ENCODE measurements at regions of chr5 and their contacts with region 1.

Region 1: DNA sequence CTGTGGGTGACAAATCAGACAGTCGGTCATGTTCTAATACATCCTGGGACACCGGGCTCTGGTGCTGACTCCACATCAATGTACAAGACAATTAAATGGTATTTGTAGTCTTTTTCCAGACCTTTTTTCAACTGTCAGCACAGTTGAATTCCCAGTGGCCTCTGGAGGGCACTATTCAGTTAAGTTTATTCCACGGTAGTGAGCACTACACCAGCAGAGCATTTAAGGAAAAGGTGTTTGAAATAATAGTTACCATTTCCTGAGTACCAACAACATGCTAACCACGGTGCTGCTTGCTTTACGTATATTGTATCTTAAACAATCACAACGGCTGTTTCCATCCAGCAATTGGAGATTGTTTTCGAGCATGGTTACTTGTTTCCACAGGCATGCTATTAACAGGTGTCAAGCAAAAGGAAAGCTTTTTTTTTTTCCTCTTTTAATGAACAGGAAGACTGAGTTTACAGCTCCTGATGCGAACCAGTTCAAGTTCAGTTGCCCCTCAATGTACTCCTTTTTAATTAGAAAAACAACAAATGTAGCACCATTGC is 186.7 kb downstream of the PDZD2 start:
- DNase-seq: peak in 8 of 9 donors; percentile 7 to 77 (median 66)
- ATAC-seq: peak; percentile 91
- H3K4me3 ChIP-seq: no peak overlapping the region
- H3K4me3 Mint-ChIP-seq: peak overlapping the region in 9 of 10 donors; percentile 25 to 79 (median 64)
- H3K27ac ChIP-seq: no peak overlapping the region
- H3K27ac Mint-ChIP-seq: peak overlapping the region in 7 of 9 donors; percentile 17 to 80 (median 32)
- H3K4me1 ChIP-seq: no peaks in the 10 kb centered on the region
- H3K4me1 Mint-ChIP-seq: peaks cover 0 to 9% (median 7%) of the 10 kb centered on the region in 7 donors
- H3K27me3 ChIP-seq: no peaks in the 10 kb centered on the region
- H3K27me3 Mint-ChIP-seq: peaks cover 0 to 9% (median 7%) of the 10 kb centered on the region in 5 donors

Region 2: GRCh38 chr5:30908356-30908755 is 917.2 kb before region 1 on chr5:
- CTCF ChIA-PET with region 1: no interaction called
- POLR2A ChIA-PET with region 1: no interaction called
- intact Hi-C with region 1: no loop called
- DNase-seq: no peak
- ATAC-seq: no peak
- H3K4me3 ChIP-seq: no peak overlapping the region
- H3K4me3 Mint-ChIP-seq: no peak overlapping the region
- H3K27ac ChIP-seq: no peak overlapping the region
- H3K27ac Mint-ChIP-seq: no peak overlapping the region
- H3K4me1 ChIP-seq: no peaks in the 10 kb centered on the region
- H3K4me1 Mint-ChIP-seq: no peaks in the 10 kb centered on the region
- H3K27me3 ChIP-seq: no peaks in the 10 kb centered on the region
- H3K27me3 Mint-ChIP-seq: no peaks in the 10 kb centered on the region

Region 3: DNA sequence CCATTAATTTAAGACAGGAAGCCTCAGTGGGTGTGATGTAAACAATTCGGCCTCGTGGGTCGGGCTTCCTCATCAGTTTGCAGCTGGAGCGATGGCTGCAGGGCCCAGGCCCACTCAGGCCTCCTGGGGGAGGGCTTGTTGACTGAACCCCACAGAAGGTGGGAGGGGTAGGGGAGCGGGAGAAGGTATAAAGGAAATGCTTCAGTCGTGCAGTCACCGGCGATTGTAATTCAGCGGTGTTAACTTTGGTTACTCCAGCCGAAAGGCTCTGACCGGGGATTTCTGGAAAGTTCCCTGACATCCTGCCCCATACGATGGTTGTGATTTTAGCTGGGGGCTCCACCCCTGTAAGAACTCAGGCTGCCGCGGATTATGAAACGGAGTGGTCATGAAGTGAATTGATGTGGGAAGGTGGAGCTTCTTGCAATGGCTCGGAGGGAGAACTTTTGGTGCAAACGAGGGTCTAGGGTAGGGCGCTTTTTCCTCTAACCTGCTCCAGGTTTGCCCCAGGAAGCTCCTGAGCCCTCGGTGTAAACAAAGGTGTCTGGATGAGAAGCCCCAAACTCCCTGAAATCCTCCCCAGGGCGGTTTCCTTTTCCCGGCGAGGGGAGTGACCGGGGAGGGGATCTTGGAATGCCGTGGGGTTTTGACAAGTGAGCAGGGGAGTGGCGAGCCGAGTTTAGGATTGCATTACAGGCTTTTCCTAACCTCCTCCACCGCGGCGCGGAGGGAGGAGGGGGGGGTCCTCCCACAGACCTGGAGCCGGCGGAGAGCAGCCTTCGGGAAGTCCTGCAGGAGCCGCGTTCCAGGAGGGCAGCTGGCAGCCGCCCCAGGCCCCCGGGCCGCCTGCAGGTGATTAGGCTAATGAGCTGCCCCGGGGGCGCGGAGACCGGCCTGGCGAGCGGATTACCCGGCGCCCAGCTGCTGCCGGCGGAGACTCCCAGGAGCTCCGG is 28.9 kb after region 1 on chr5:
- CTCF ChIA-PET with region 1: interaction called, 3 read pairs
- POLR2A ChIA-PET with region 1: no interaction called
- intact Hi-C with region 1: loop called in 1 of 2 experiments (anchors 1 kb)
- DNase-seq: peak in 4 of 9 donors; percentile 10 to 26 (median 24)
- ATAC-seq: peak; percentile 43
- H3K4me3 ChIP-seq: peak overlapping the region; percentile 63
- H3K4me3 Mint-ChIP-seq: peak overlapping the region; percentile 76 to 97 (median 88)
- H3K27ac ChIP-seq: peak overlapping the region; percentile 66
- H3K27ac Mint-ChIP-seq: peak overlapping the region in 8 of 9 donors; percentile 81 to 93 (median 85)
- H3K4me1 ChIP-seq: no peaks in the 10 kb centered on the region
- H3K4me1 Mint-ChIP-seq: peaks cover 9 to 44% (median 28%) of the 10 kb centered on the region in 7 donors
- H3K27me3 ChIP-seq: no peaks in the 10 kb centered on the region
- H3K27me3 Mint-ChIP-seq: peaks cover 0 to 45% (median 22%) of the 10 kb centered on the region in 5 donors

Region 4: GRCh38 chr5:32076699-32077695 is 251.4 kb after region 1 on chr5:
- CTCF ChIA-PET with region 1: interaction called, 22 read pairs
- POLR2A ChIA-PET with region 1: no interaction called
- intact Hi-C with region 1: loop called in 1 of 2 experiments (anchors 1 kb)
- DNase-seq: peak in 6 of 9 donors; percentile 10 to 66 (median 57)
- ATAC-seq: no peak
- H3K4me3 ChIP-seq: no peak overlapping the region
- H3K4me3 Mint-ChIP-seq: no peak overlapping the region
- H3K27ac ChIP-seq: no peak overlapping the region
- H3K27ac Mint-ChIP-seq: no peak overlapping the region
- H3K4me1 ChIP-seq: no peaks in the 10 kb centered on the region
- H3K4me1 Mint-ChIP-seq: peaks cover 0 to 5% (median 0%) of the 10 kb centered on the region in 7 donors
- H3K27me3 ChIP-seq: no peaks in the 10 kb centered on the region
- H3K27me3 Mint-ChIP-seq: no peaks in the 10 kb centered on the region

Region 5: GRCh38 chr5:32232441-32233219 is 407.0 kb after region 1 on chr5:
- CTCF ChIA-PET with region 1: no interaction called
- POLR2A ChIA-PET with region 1: no interaction called
- intact Hi-C with region 1: loop called in 1 of 2 experiments (anchors 10 kb)
- DNase-seq: peak; percentile 45 to 73 (median 64)
- ATAC-seq: peak; percentile 88
- H3K4me3 ChIP-seq: no peak overlapping the region
- H3K4me3 Mint-ChIP-seq: no peak overlapping the region
- H3K27ac ChIP-seq: no peak overlapping the region
- H3K27ac Mint-ChIP-seq: peak overlapping the region; percentile 45 to 71 (median 62)
- H3K4me1 ChIP-seq: no peaks in the 10 kb centered on the region
- H3K4me1 Mint-ChIP-seq: peaks cover 0 to 12% (median 7%) of the 10 kb centered on the region in 7 donors
- H3K27me3 ChIP-seq: no peaks in the 10 kb centered on the region
- H3K27me3 Mint-ChIP-seq: no peaks in the 10 kb centered on the region

Region 6: GRCh38 chr5:32261198-32261597 is 435.6 kb after region 1 on chr5:
- CTCF ChIA-PET with region 1: no interaction called
- POLR2A ChIA-PET with region 1: no interaction called
- intact Hi-C with region 1: no loop called
- DNase-seq: peak in 1 of 9 donors; percentile 32
- ATAC-seq: peak; percentile 38
- H3K4me3 ChIP-seq: no peak overlapping the region
- H3K4me3 Mint-ChIP-seq: no peak overlapping the region
- H3K27ac ChIP-seq: no peak overlapping the region
- H3K27ac Mint-ChIP-seq: peak overlapping the region in 6 of 9 donors; percentile 16 to 77 (median 46)
- H3K4me1 ChIP-seq: no peaks in the 10 kb centered on the region
- H3K4me1 Mint-ChIP-seq: peaks cover 0 to 18% (median 5%) of the 10 kb centered on the region in 7 donors
- H3K27me3 ChIP-seq: no peaks in the 10 kb centered on the region
- H3K27me3 Mint-ChIP-seq: no peaks in the 10 kb centered on the region

Region 7: DNA sequence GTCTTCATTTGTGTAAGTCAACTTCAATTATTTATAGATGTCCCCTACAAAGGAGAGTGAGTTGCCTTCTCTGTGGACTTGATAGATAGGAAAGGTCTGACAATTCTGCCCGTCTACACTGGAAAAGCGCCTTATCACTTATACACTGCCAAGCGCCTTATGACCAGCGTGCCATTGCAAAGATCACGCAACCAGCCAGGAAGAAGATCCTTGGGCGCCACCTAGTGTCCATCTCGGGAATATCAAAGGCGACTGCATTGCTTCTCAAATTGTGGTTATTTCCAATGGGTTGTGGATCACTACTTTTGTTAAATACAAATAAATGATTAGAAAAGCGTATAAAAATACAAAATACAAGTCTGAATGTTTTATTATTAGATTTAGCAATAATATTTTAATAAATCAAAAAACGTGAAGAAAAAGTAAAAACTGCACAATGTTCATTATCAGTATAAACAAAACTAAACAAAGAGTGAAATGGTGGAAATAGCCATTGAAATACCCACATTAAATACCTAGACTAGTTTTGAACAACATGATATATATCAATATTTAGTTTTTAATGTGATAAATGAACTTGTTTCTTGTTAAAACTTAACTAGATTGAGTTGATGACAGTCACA is 787.6 kb after region 1 on chr5:
- CTCF ChIA-PET with region 1: no interaction called
- POLR2A ChIA-PET with region 1: no interaction called
- intact Hi-C with region 1: loop called in 1 of 2 experiments (anchors 1 kb)
- DNase-seq: peak; percentile 55 to 84 (median 75)
- ATAC-seq: peak; percentile 92
- H3K4me3 ChIP-seq: no peak overlapping the region
- H3K4me3 Mint-ChIP-seq: no peak overlapping the region
- H3K27ac ChIP-seq: no peak overlapping the region
- H3K27ac Mint-ChIP-seq: peak overlapping the region in 2 of 9 donors; percentile 6 to 20
- H3K4me1 ChIP-seq: no peaks in the 10 kb centered on the region
- H3K4me1 Mint-ChIP-seq: peaks cover 3 to 14% (median 6%) of the 10 kb centered on the region in 7 donors
- H3K27me3 ChIP-seq: no peaks in the 10 kb centered on the region
- H3K27me3 Mint-ChIP-seq: no peaks in the 10 kb centered on the region

Region 8: GRCh38 chr5:33401482-33402390 is 1576.1 kb after region 1 on chr5:
- CTCF ChIA-PET with region 1: no interaction called
- POLR2A ChIA-PET with region 1: no interaction called
- intact Hi-C with region 1: no loop called
- DNase-seq: no peak
- ATAC-seq: no peak
- H3K4me3 ChIP-seq: no peak overlapping the region
- H3K4me3 Mint-ChIP-seq: no peak overlapping the region
- H3K27ac ChIP-seq: no peak overlapping the region
- H3K27ac Mint-ChIP-seq: no peak overlapping the region
- H3K4me1 ChIP-seq: no peaks in the 10 kb centered on the region
- H3K4me1 Mint-ChIP-seq: peaks cover 0 to 4% (median 0%) of the 10 kb centered on the region in 7 donors
- H3K27me3 ChIP-seq: no peaks in the 10 kb centered on the region
- H3K27me3 Mint-ChIP-seq: peaks cover 0 to 5% (median 0%) of the 10 kb centered on the region in 5 donors